ENCODE measurements at regions of chr16 and their contacts with region 1.

Region 1: GRCh38 chr16:88790312-88791211 is 5.5 kb upstream of the PIEZO1 start:
- DNase-seq: peak; percentile 51 to 78 (median 55)
- H3K4me3 ChIP-seq: peak overlapping the region; percentile 22 to 32
- H3K4me3 Mint-ChIP-seq: peak overlapping the region; percentile 67 to 85 (median 76)
- H3K27ac ChIP-seq: peak overlapping the region; percentile 38
- H3K27ac Mint-ChIP-seq: peak overlapping the region; percentile 75 to 95 (median 91)
- H3K4me1 ChIP-seq: peaks cover 62% of the 10 kb centered on the region
- H3K4me1 Mint-ChIP-seq: peaks cover 29 to 59% (median 44%) of the 10 kb centered on the region in 4 donors
- H3K27me3 ChIP-seq: no peaks in the 10 kb centered on the region
- H3K27me3 Mint-ChIP-seq: no peaks in the 10 kb centered on the region

Region 2: GRCh38 chr16:88803264-88803987 is 12.9 kb after region 1 on chr16 and contains the start of gene CDT1:
- CTCF ChIA-PET with region 1: interaction called, 7 read pairs
- POLR2A ChIA-PET with region 1: interaction called, 7 read pairs
- intact Hi-C with region 1: loop called (anchors 1 kb)
- DNase-seq: peak; percentile 74 to 90 (median 84)
- H3K4me3 ChIP-seq: peak within 1 kb of the TSS; percentile 36 to 68
- H3K4me3 Mint-ChIP-seq: peak within 1 kb of the TSS; percentile 83 to 91 (median 88)
- H3K27ac ChIP-seq: peak within 1 kb of the TSS; percentile 55
- H3K27ac Mint-ChIP-seq: peak within 1 kb of the TSS; percentile 73 to 95 (median 89)
- H3K4me1 ChIP-seq: peaks cover 26% of the 10 kb centered on the region
- H3K4me1 Mint-ChIP-seq: peaks cover 6 to 24% (median 16%) of the 10 kb centered on the region in 4 donors
- H3K27me3 ChIP-seq: no peaks in the 10 kb centered on the region
- H3K27me3 Mint-ChIP-seq: no peaks in the 10 kb centered on the region
- total RNA-seq, gene CDT1: 0.17 TPM

Region 3: GRCh38 chr16:88831838-88832237 is 41.3 kb after region 1 on chr16:
- CTCF ChIA-PET with region 1: no interaction called
- POLR2A ChIA-PET with region 1: no interaction called
- intact Hi-C with region 1: no loop called
- DNase-seq: no peak
- H3K4me3 ChIP-seq: no peak overlapping the region
- H3K4me3 Mint-ChIP-seq: no peak overlapping the region
- H3K27ac ChIP-seq: no peak overlapping the region
- H3K27ac Mint-ChIP-seq: no peak overlapping the region
- H3K4me1 ChIP-seq: no peaks in the 10 kb centered on the region
- H3K4me1 Mint-ChIP-seq: no peaks in the 10 kb centered on the region
- H3K27me3 ChIP-seq: no peaks in the 10 kb centered on the region
- H3K27me3 Mint-ChIP-seq: no peaks in the 10 kb centered on the region

Region 4: GRCh38 chr16:88870608-88871348 is 80.2 kb after region 1 on chr16:
- CTCF ChIA-PET with region 1: no interaction called
- POLR2A ChIA-PET with region 1: no interaction called
- intact Hi-C with region 1: no loop called
- DNase-seq: no peak
- H3K4me3 ChIP-seq: no peak overlapping the region
- H3K4me3 Mint-ChIP-seq: peak overlapping the region in 6 of 8 donors; percentile 8 to 52 (median 44)
- H3K27ac ChIP-seq: no peak overlapping the region
- H3K27ac Mint-ChIP-seq: no peak overlapping the region
- H3K4me1 ChIP-seq: no peaks in the 10 kb centered on the region
- H3K4me1 Mint-ChIP-seq: peaks cover 0 to 3% (median under 1%) of the 10 kb centered on the region in 4 donors
- H3K27me3 ChIP-seq: no peaks in the 10 kb centered on the region
- H3K27me3 Mint-ChIP-seq: peaks cover 6 to 11% of the 10 kb centered on the region in 2 donors

Measured in CD4-positive, alpha-beta memory T cell (primary cell).